CD8-positive, alpha-beta T cell (primary cell): ENCODE measurements at regions of chr18 and their contacts with region 1.

Region 1: GRCh38 chr18:35231052-35231451 is 9.8 kb upstream of the ZNF397 start:
- DNase-seq: peak; percentile 59 to 89 (median 80)
- ATAC-seq: peak; percentile 98
- H3K4me3 ChIP-seq: no peak overlapping the region
- H3K4me3 Mint-ChIP-seq: peak overlapping the region; percentile 50
- H3K27ac ChIP-seq: no peak overlapping the region
- H3K27ac Mint-ChIP-seq: no peak overlapping the region
- H3K4me1 ChIP-seq: no peaks in the 10 kb centered on the region
- H3K4me1 Mint-ChIP-seq: peaks cover 3% of the 10 kb centered on the region
- H3K27me3 ChIP-seq: peaks cover 0 to 3% of the 10 kb centered on the region in 2 experiments
- H3K27me3 Mint-ChIP-seq: no peaks in the 10 kb centered on the region
- CTCF ChIP-seq: peak; percentile 92

Region 2: GRCh38 chr18:35267161-35267651 is 36.2 kb after region 1 on chr18:
- CTCF ChIA-PET with region 1: interaction called, 4 read pairs
- POLR2A ChIA-PET with region 1: no interaction called
- intact Hi-C with region 1: loop called in 1 of 2 experiments (anchors 5 kb)
- DNase-seq: peak; percentile 44 to 86 (median 74)
- ATAC-seq: peak; percentile 84
- H3K4me3 ChIP-seq: peak overlapping the region; percentile 77 to 84
- H3K4me3 Mint-ChIP-seq: peak overlapping the region; percentile 97
- H3K27ac ChIP-seq: peak overlapping the region; percentile 69 to 87
- H3K27ac Mint-ChIP-seq: peak overlapping the region; percentile 97
- H3K4me1 ChIP-seq: peaks cover 7% of the 10 kb centered on the region
- H3K4me1 Mint-ChIP-seq: peaks cover 26% of the 10 kb centered on the region
- H3K27me3 ChIP-seq: no peaks in the 10 kb centered on the region
- H3K27me3 Mint-ChIP-seq: no peaks in the 10 kb centered on the region
- CTCF ChIP-seq: no peak

Region 3: DNA sequence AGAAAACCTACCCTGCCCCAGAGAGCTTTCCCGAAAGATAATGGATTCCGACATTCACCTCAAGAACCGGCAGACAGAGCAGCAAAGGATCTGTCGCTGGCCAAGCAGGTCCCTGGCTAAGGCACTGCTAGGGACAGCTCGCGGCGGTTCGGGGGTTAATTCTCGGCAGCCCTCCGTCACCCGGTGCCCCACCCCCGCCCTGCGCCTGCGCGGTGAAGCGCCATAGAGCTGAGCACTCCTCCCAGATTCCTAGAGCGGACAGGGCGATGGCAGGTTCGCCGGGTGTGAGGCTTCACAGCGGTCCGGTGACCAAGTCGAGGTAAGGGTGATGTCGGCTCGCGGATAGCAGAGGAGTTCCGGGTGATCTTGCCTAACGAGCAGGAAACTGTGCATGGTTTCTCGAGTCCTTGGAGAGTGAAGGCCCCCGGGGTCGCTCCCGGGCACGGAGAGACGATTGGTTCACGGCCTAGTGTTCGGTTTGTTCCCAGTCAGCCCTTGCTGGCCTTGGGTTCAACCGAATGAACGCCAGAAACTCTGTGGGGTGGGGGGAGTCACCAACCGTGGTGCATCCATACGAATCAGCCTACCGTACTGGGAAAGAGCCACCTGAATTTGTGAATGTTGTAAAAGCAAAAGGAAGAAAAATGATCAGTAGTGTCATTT is 59.2 kb after region 1 on chr18 and contains the start of gene ZSCAN30:
- CTCF ChIA-PET with region 1: interaction called, 3 read pairs
- POLR2A ChIA-PET with region 1: interaction called, 3 read pairs
- intact Hi-C with region 1: loop called in 1 of 2 experiments (anchors 2 kb)
- DNase-seq: peak; percentile 92 to 98 (median 96)
- ATAC-seq: peak; percentile 94
- H3K4me3 ChIP-seq: peak within 1 kb of the TSS; percentile 78 to 82
- H3K4me3 Mint-ChIP-seq: peak within 1 kb of the TSS; percentile 99
- H3K27ac ChIP-seq: peak within 1 kb of the TSS; percentile 69 to 85
- H3K27ac Mint-ChIP-seq: peak within 1 kb of the TSS; percentile 99
- H3K4me1 ChIP-seq: peaks cover 17% of the 10 kb centered on the region
- H3K4me1 Mint-ChIP-seq: peaks cover 70% of the 10 kb centered on the region
- H3K27me3 ChIP-seq: no peaks in the 10 kb centered on the region
- H3K27me3 Mint-ChIP-seq: no peaks in the 10 kb centered on the region
- CTCF ChIP-seq: no peak
- total RNA-seq, gene ZSCAN30: 6.2 to 6.3 TPM

Region 4: DNA sequence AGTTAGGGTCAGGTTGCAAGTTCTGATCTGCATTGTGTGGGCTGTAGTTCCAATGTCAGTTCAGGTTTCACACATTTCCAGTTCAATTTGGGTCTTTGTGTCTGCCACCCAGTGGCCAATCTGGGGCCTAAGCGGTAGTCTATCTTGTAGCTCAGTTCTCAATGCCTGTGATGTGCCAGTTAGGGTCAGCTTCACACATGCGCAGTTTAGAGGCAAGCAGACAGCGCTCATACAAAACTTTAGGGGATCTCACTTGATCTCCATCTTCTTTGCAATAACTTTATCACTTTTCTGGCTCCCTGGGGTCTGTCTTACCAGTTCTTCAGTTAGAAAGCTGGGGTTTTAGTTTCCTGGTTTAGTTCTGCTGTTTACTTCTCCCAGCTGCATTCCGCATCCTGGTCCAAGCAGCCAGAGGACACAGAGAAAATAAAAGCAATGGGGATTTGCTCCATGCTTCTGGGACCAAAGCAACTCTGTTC is 124.1 kb after region 1 on chr18:
- CTCF ChIA-PET with region 1: interaction called, 64 read pairs
- POLR2A ChIA-PET with region 1: no interaction called
- intact Hi-C with region 1: loop called (anchors 1 kb)
- DNase-seq: peak; percentile 19 to 83 (median 59)
- ATAC-seq: peak; percentile 98
- H3K4me3 ChIP-seq: no peak overlapping the region
- H3K4me3 Mint-ChIP-seq: no peak overlapping the region
- H3K27ac ChIP-seq: no peak overlapping the region
- H3K27ac Mint-ChIP-seq: no peak overlapping the region
- H3K4me1 ChIP-seq: no peaks in the 10 kb centered on the region
- H3K4me1 Mint-ChIP-seq: peaks cover 4% of the 10 kb centered on the region
- H3K27me3 ChIP-seq: no peaks in the 10 kb centered on the region
- H3K27me3 Mint-ChIP-seq: peaks cover 2% of the 10 kb centered on the region
- CTCF ChIP-seq: peak; percentile 50

Region 5: GRCh38 chr18:35386600-35387351 is 155.7 kb after region 1 on chr18:
- CTCF ChIA-PET with region 1: interaction called, 9 read pairs
- POLR2A ChIA-PET with region 1: no interaction called
- intact Hi-C with region 1: loop called (anchors 1 to 10 kb)
- DNase-seq: peak; percentile 18 to 88 (median 64)
- ATAC-seq: peak; percentile 99
- H3K4me3 ChIP-seq: no peak overlapping the region
- H3K4me3 Mint-ChIP-seq: no peak overlapping the region
- H3K27ac ChIP-seq: no peak overlapping the region
- H3K27ac Mint-ChIP-seq: no peak overlapping the region
- H3K4me1 ChIP-seq: no peaks in the 10 kb centered on the region
- H3K4me1 Mint-ChIP-seq: peaks cover 2% of the 10 kb centered on the region
- H3K27me3 ChIP-seq: peaks cover 0 to 4% of the 10 kb centered on the region in 2 experiments
- H3K27me3 Mint-ChIP-seq: peaks cover 19% of the 10 kb centered on the region
- CTCF ChIP-seq: peak; percentile 96